Dorsolateral prefrontal cortex (tissue), 120 donors: ENCODE measurements at regions of chr14 and their contacts with region 1.

Region 1: DNA sequence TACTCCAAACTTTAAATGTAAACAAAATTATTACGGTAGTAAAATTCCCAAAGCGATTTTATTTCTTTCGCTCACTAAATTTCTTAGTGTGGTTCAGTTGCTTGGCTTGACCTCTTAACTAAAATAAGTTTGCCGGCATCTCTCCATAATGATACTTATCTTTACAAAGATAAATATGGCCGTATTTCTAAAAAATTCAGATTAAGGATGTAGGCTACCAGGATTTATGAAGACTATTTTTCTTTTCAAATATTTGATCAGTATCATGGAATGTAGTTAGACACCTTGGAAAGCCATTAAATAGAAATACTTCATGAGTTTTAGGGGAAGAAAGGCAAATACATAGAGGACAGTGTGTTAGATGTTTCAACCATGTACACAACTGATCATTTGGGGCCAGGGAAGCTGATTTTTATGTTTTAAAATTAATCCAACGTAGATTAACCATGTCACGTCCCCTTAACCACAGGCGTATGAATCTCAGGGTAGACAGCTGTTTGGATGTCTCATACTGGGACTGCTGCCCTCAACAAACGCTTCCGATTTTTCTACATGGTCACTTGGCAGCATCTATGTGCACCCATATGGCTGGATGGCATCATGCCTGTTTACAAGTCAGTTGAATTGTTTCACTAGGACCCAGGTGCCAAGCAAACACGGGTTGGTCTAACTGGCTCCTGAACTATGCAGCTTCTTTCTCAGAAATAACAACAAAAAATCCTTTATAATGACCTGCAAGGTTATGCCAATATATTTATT is 393.6 kb downstream of the NPAS3 start:
- DNase-seq: peak; percentile 17 to 90 (median 68)
- H3K4me3 ChIP-seq: peak overlapping the region in 8 of 59 donors; percentile 1 to 27 (median 8)
- H3K27ac ChIP-seq: peak overlapping the region in 32 of 59 donors; percentile 2 to 65 (median 27)
- H3K27me3 ChIP-seq: no peaks in the 10 kb centered on the region
- CTCF ChIP-seq: peak in 2 of 56 donors; percentile 8 to 12

Region 2: GRCh38 chr14:32835924-32836323 is 496.4 kb before region 1 on chr14:
- intact Hi-C with region 1: no loop called
- DNase-seq: no peak
- H3K4me3 ChIP-seq: no peak overlapping the region
- H3K27ac ChIP-seq: peak overlapping the region in 2 of 59 donors; percentile 2 to 15
- H3K27me3 ChIP-seq: no peaks in the 10 kb centered on the region
- CTCF ChIP-seq: no peak

Region 3: DNA sequence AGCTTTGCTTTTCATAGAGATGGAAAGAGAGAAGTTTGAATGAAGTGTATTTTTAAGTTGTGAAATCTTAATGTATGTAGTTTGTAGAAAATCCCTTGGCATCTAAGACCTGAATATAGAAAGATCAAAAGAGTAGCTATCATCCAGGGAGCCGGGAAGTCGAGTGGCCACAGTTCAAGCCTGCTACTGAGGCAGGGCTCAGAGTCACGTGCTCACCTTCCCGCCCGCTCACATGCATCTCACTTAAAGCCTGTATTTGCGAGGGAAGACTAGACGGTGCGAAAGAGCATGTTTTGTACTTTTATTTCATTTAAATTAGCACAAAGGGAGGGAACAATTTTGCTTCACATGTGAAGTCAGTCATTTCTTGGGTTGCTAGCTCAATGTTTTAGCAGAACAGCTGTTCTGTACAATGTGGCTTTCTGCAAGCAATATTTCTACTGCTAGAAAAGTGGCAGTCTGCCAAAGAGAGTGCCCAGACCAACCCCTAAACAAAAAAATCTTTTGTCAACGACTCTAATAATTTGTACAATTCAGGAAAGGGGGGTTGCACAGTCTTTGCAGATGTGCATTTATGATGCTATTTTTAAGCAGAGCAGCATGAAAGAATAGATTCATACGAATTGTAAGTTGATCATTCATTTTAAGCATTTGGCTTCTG is 102.9 kb before region 1 on chr14:
- intact Hi-C with region 1: loop called in 1 of 2 experiments (anchors 5 kb)
- DNase-seq: peak in 9 of 10 donors; percentile 3 to 70 (median 44)
- H3K4me3 ChIP-seq: peak overlapping the region in 47 of 59 donors; percentile 1 to 55 (median 26)
- H3K27ac ChIP-seq: peak overlapping the region in 41 of 59 donors; percentile 1 to 78 (median 40)
- H3K27me3 ChIP-seq: no peaks in the 10 kb centered on the region
- CTCF ChIP-seq: peak in 6 of 56 donors; percentile 12 to 38 (median 19)

Region 4: GRCh38 chr14:33347796-33348195 is 15.5 kb after region 1 on chr14:
- intact Hi-C with region 1: loop called in 1 of 2 experiments (anchors 2 kb)
- DNase-seq: no peak
- H3K4me3 ChIP-seq: no peak overlapping the region
- H3K27ac ChIP-seq: peak overlapping the region in 1 of 59 donors; percentile 45
- H3K27me3 ChIP-seq: no peaks in the 10 kb centered on the region
- CTCF ChIP-seq: no peak